ENCODE measurements at regions of chr1 and their contacts with region 1.

Region 1: GRCh38 chr1:110674337-110675059 is at the start of gene KCNA3:
- DNase-seq: peak; percentile 45 to 86 (median 65)
- ATAC-seq: peak; percentile 25
- H3K4me3 ChIP-seq: peak within 1 kb of the TSS; percentile 99
- H3K4me3 Mint-ChIP-seq: peak within 1 kb of the TSS; percentile 90
- H3K27ac ChIP-seq: peak within 1 kb of the TSS; percentile 93 to 95
- H3K27ac Mint-ChIP-seq: peak within 1 kb of the TSS; percentile 73
- H3K4me1 ChIP-seq: peaks cover 16% of the 10 kb centered on the region
- H3K4me1 Mint-ChIP-seq: peaks cover 59% of the 10 kb centered on the region
- H3K27me3 ChIP-seq: no peaks in the 10 kb centered on the region
- H3K27me3 Mint-ChIP-seq: no peaks in the 10 kb centered on the region
- CTCF ChIP-seq: peak; percentile 49
- total RNA-seq, gene KCNA3: 112 to 118 TPM

Region 2: DNA sequence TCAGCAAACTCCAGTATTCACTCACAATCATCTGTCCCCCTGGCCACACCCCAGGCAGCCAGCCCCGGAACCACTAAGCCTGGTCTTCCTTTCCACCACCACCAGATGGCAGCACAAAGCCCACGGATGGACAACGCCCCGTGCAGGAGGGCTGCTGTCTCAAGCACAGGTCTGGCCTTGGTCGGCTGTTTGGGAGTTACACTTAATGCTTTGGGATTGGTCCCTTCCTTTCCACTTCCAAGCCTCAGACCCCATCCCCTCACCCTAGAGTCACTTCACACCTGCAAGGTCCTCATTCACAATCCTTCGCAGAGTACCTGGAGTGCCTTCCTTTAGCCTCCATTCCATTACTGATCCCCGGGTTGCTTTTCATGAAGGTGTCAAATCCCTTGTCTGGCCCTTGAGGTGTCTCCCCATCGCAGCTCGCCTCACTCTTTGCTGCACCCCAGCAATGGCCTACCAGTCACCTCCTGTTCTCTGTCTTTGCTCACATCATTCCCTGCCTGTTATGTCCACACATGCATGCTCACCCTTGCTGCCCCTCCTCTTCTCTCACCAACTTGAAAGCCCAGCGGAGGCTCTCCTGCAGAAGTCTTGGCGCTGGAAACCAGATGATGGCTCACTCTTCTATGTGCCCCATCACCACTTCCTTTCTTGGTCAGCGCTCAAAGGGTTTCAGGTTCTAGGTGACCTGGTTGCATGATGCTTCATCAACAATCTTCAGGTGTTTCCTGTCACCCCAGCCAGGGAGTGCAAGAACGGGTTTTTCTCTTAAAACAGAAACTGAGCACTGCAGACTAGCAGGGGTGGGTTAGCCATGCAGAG is 43.4 kb before region 1 on chr1:
- CTCF ChIA-PET with region 1: interaction called, 10 read pairs
- POLR2A ChIA-PET with region 1: interaction called, 94 read pairs
- intact Hi-C with region 1: loop called (anchors 1 to 2 kb)
- DNase-seq: peak; percentile 77 to 93 (median 83)
- ATAC-seq: peak; percentile 72
- H3K4me3 ChIP-seq: peak overlapping the region; percentile 43
- H3K4me3 Mint-ChIP-seq: no peak overlapping the region
- H3K27ac ChIP-seq: peak overlapping the region; percentile 66 to 75
- H3K27ac Mint-ChIP-seq: no peak overlapping the region
- H3K4me1 ChIP-seq: peaks cover 87% of the 10 kb centered on the region
- H3K4me1 Mint-ChIP-seq: peaks cover 47% of the 10 kb centered on the region
- H3K27me3 ChIP-seq: no peaks in the 10 kb centered on the region
- H3K27me3 Mint-ChIP-seq: no peaks in the 10 kb centered on the region
- CTCF ChIP-seq: peak; percentile 87

Region 3: DNA sequence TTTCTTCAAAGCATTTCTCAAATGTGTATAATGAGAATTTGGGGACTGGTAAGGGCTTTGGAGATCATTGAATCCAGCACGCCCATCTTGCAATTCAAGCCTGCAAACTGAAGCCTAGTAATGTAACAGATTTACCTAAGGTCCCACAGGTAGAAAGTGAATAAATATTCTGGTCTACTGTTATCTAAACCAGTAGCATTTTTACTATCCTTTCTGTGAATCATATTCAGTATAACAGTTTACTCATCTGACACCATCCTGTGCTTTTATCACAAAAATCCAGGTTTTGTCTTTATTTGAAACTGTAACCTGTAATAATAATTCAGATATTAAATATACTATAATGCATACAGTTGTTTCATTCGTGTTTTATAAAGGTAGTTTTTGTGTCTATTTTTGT is 17.1 kb before region 1 on chr1:
- CTCF ChIA-PET with region 1: no interaction called
- POLR2A ChIA-PET with region 1: interaction called, 56 read pairs
- intact Hi-C with region 1: loop called in 1 of 2 experiments (anchors 2 kb)
- DNase-seq: no peak
- ATAC-seq: no peak
- H3K4me3 ChIP-seq: no peak overlapping the region
- H3K4me3 Mint-ChIP-seq: no peak overlapping the region
- H3K27ac ChIP-seq: no peak overlapping the region
- H3K27ac Mint-ChIP-seq: peak overlapping the region; percentile 74
- H3K4me1 ChIP-seq: peaks cover 6% of the 10 kb centered on the region
- H3K4me1 Mint-ChIP-seq: peaks cover 60% of the 10 kb centered on the region
- H3K27me3 ChIP-seq: no peaks in the 10 kb centered on the region
- H3K27me3 Mint-ChIP-seq: no peaks in the 10 kb centered on the region
- CTCF ChIP-seq: no peak

Region 4: GRCh38 chr1:110726755-110727154 is 52.3 kb after region 1 on chr1:
- CTCF ChIA-PET with region 1: no interaction called
- POLR2A ChIA-PET with region 1: interaction called, 16 read pairs
- intact Hi-C with region 1: no loop called
- DNase-seq: peak in 3 of 14 experiments; percentile 7 to 58 (median 9)
- ATAC-seq: peak; percentile 63
- H3K4me3 ChIP-seq: peak overlapping the region; percentile 17
- H3K4me3 Mint-ChIP-seq: peak overlapping the region; percentile 69
- H3K27ac ChIP-seq: peak overlapping the region; percentile 11 to 56
- H3K27ac Mint-ChIP-seq: peak overlapping the region; percentile 52
- H3K4me1 ChIP-seq: peaks cover 12% of the 10 kb centered on the region
- H3K4me1 Mint-ChIP-seq: peaks cover 33% of the 10 kb centered on the region
- H3K27me3 ChIP-seq: no peaks in the 10 kb centered on the region
- H3K27me3 Mint-ChIP-seq: no peaks in the 10 kb centered on the region
- CTCF ChIP-seq: no peak

Region 5: DNA sequence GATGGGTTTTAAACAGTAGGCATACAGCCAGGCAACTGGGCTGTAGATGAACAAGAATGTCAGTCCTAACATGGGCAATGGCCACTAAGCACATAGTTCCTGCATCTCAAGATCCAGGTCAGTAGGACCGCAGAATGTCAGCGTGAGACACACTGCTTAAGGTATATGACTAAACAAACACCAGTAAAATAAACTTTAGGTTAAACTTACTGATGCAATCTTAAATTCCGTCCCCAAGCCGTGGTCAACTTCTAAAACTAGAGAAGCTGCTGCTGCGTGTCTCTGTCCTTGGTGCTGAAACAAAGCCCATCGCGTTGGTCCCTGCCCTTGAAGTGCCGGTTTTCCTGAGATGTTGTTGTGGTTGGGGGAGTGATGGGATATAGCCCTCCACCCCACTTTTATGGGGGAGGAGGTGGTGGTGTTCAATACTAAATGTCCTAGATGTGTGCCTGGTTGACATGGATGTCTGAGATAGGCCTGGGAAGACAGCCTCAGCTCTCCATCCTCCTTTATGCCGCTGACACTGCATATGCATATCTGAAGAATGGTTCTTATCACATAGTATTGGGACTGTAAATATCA is 72.2 kb after region 1 on chr1:
- CTCF ChIA-PET with region 1: no interaction called
- POLR2A ChIA-PET with region 1: no interaction called
- intact Hi-C with region 1: no loop called
- DNase-seq: peak; percentile 34 to 82 (median 46)
- ATAC-seq: no peak
- H3K4me3 ChIP-seq: no peak overlapping the region
- H3K4me3 Mint-ChIP-seq: no peak overlapping the region
- H3K27ac ChIP-seq: no peak overlapping the region
- H3K27ac Mint-ChIP-seq: no peak overlapping the region
- H3K4me1 ChIP-seq: peaks cover 2% of the 10 kb centered on the region
- H3K4me1 Mint-ChIP-seq: no peaks in the 10 kb centered on the region
- H3K27me3 ChIP-seq: peaks cover 0 to 11% of the 10 kb centered on the region in 2 experiments
- H3K27me3 Mint-ChIP-seq: peaks cover 32% of the 10 kb centered on the region
- CTCF ChIP-seq: no peak

Region 6: DNA sequence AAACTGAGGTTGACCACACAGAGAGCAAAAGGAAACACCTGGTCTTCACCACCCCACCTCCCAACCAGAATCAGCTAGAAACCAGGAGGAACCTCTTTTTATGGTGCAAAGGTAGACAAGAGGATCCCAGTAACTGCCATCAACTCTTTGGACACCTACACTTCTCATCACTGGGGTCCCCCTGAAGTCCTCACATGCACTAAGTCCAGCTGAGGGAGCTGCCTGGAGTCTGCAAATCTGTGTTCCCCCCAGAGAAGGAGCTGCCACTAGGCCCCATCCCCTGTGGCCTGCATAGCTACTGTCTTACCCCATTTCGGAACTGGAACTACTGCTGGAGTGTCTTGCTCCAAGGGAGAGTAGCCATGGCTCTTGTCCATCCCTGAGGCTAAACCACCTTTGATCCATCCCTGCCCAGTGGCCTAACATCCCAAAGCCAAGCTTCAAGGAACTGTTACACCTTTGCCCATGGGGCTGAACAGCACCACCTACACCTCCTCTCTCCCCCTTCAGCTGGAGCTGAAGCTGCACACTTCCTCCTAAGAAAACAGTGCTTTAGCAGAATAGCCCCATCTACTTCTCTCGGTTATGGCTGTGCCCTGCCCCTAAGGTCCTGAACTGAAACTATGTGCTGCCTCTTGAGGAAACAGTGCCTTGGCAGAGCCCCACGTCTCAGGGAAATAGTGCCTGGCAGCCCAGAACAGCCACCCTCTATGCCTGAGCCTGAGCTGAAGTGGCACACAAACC is 113.0 kb after region 1 on chr1:
- CTCF ChIA-PET with region 1: interaction called, 4 read pairs
- POLR2A ChIA-PET with region 1: interaction called, 28 read pairs
- intact Hi-C with region 1: no loop called
- DNase-seq: peak in 11 of 14 experiments; percentile 4 to 87 (median 41)
- ATAC-seq: peak; percentile 71
- H3K4me3 ChIP-seq: peak overlapping the region; percentile 35
- H3K4me3 Mint-ChIP-seq: peak overlapping the region; percentile 75
- H3K27ac ChIP-seq: peak overlapping the region; percentile 23 to 58
- H3K27ac Mint-ChIP-seq: peak overlapping the region; percentile 82
- H3K4me1 ChIP-seq: peaks cover 55% of the 10 kb centered on the region
- H3K4me1 Mint-ChIP-seq: peaks cover 77% of the 10 kb centered on the region
- H3K27me3 ChIP-seq: no peaks in the 10 kb centered on the region
- H3K27me3 Mint-ChIP-seq: no peaks in the 10 kb centered on the region
- CTCF ChIP-seq: no peak